Naive thymus-derived CD4-positive, alpha-beta T cell (primary cell): ENCODE measurements at regions of chr5 and their contacts with region 1.

Region 1: DNA sequence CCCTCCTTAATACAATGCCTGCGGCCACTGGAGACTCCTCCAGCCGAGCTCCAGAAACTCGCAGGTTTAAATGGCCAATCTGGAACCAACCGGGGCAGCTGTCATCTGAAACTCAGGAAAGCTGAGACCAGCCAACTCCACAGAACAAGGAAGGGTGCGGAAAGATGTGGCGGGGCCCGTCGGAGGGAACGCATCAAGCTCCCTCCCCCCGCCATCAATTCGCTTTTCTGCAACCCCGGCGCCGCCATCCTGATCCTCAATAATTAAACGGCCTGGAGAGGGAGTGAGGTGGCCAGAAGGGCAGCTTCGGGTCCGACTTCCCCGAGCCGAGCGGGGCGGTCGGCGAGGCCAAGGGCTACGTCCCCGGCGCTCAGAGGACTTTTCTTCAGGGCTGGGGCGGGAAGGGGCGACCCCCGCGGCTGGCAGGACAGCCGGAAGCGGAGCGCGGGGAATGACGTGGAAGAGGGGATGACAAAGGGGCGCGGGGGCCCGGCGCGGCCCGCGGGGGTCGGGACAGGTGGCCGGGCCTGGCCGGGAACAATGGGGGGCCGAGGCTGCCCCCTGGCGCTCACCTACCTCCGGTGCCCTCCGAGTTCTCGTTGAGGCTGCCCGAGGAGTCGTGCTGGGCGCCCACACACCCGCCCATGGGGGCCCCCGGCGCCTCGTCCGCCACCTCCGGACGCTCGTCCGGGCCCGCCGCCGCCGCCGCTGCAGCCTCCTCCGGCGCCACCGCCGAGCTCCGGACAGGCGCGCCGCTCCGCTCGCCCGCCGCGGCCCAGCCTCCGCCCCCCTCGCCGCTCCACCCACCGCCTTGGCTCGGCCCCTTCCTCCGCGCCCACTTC is at the start of gene UBTD2:
- DNase-seq: peak in 7 of 9 donors; percentile 51 to 84 (median 67)
- ATAC-seq: peak; percentile 89
- H3K4me3 ChIP-seq: peak within 1 kb of the TSS; percentile 73
- H3K4me3 Mint-ChIP-seq: peak within 1 kb of the TSS; percentile 85 to 94 (median 90)
- H3K27ac ChIP-seq: peak within 1 kb of the TSS; percentile 61
- H3K27ac Mint-ChIP-seq: peak within 1 kb of the TSS; percentile 67 to 94 (median 75)
- H3K4me1 ChIP-seq: peaks cover 11 to 13% of the 10 kb centered on the region in 2 donors
- H3K4me1 Mint-ChIP-seq: peaks cover 10 to 34% (median 29%) of the 10 kb centered on the region in 7 donors
- H3K27me3 ChIP-seq: no peaks in the 10 kb centered on the region
- H3K27me3 Mint-ChIP-seq: peaks cover 0 to 24% (median 0%) of the 10 kb centered on the region in 5 donors
- total RNA-seq, gene UBTD2: 2.3 to 8.3 (median 5.9) TPM

Region 2: GRCh38 chr5:171031977-171032376 is 1251.3 kb before region 1 on chr5:
- CTCF ChIA-PET with region 1: no interaction called
- POLR2A ChIA-PET with region 1: no interaction called
- intact Hi-C with region 1: no loop called
- DNase-seq: no peak
- ATAC-seq: no peak
- H3K4me3 ChIP-seq: no peak overlapping the region
- H3K4me3 Mint-ChIP-seq: no peak overlapping the region
- H3K27ac ChIP-seq: no peak overlapping the region
- H3K27ac Mint-ChIP-seq: no peak overlapping the region
- H3K4me1 ChIP-seq: no peaks in the 10 kb centered on the region
- H3K4me1 Mint-ChIP-seq: no peaks in the 10 kb centered on the region
- H3K27me3 ChIP-seq: no peaks in the 10 kb centered on the region
- H3K27me3 Mint-ChIP-seq: peaks cover 0 to 5% (median 0%) of the 10 kb centered on the region in 5 donors

Region 3: GRCh38 chr5:171175746-171176145 is 1107.5 kb before region 1 on chr5:
- CTCF ChIA-PET with region 1: no interaction called
- POLR2A ChIA-PET with region 1: no interaction called
- intact Hi-C with region 1: no loop called
- DNase-seq: no peak
- ATAC-seq: no peak
- H3K4me3 ChIP-seq: no peak overlapping the region
- H3K4me3 Mint-ChIP-seq: no peak overlapping the region
- H3K27ac ChIP-seq: no peak overlapping the region
- H3K27ac Mint-ChIP-seq: no peak overlapping the region
- H3K4me1 ChIP-seq: no peaks in the 10 kb centered on the region
- H3K4me1 Mint-ChIP-seq: no peaks in the 10 kb centered on the region
- H3K27me3 ChIP-seq: no peaks in the 10 kb centered on the region
- H3K27me3 Mint-ChIP-seq: peaks cover 0 to 11% (median 6%) of the 10 kb centered on the region in 5 donors

Region 4: DNA sequence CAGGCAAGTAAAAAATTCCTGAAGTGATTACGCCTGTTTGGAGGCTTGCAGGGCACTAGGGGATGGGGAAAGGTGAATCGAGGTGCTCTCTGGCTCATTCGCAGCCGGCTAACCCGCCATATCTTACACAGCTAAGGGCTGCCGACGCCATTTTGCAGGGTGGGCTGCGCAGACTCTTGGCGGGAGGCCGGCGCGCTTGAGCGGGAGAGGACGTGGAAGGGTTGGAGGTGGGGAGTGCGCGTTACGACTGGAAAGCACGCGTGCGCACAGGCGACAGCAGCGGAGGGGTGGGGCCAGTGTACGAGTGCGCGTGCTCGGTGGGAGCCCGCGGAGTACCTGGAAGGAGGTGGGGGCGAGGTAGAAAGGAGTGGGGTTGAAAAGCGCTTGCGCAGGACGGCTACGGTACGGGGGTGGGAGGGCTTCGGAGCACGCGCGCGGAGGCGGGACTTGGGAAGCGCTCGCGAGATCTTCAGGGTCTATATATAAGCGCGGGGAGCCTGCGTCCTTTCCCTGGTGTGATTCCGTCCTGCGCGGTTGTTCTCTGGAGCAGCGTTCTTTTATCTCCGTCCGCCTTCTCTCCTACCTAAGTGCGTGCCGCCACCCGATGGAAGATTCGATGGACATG is 895.8 kb before region 1 on chr5 and contains the start of gene NPM1:
- CTCF ChIA-PET with region 1: no interaction called
- POLR2A ChIA-PET with region 1: interaction called, 4 read pairs
- intact Hi-C with region 1: loop called (anchors 1 to 5 kb)
- DNase-seq: peak; percentile 90 to 99 (median 98)
- ATAC-seq: peak; percentile 93
- H3K4me3 ChIP-seq: peak within 1 kb of the TSS; percentile 91
- H3K4me3 Mint-ChIP-seq: peak within 1 kb of the TSS; percentile 92 to 99 (median 98)
- H3K27ac ChIP-seq: peak within 1 kb of the TSS; percentile 88
- H3K27ac Mint-ChIP-seq: peak within 1 kb of the TSS; percentile 96 to 100 (median 98)
- H3K4me1 ChIP-seq: peaks cover 31 to 40% of the 10 kb centered on the region in 2 donors
- H3K4me1 Mint-ChIP-seq: peaks cover 25 to 52% (median 49%) of the 10 kb centered on the region in 7 donors
- H3K27me3 ChIP-seq: no peaks in the 10 kb centered on the region
- H3K27me3 Mint-ChIP-seq: peaks cover 0 to 6% (median 0%) of the 10 kb centered on the region in 5 donors
- total RNA-seq, gene NPM1: 807 to 1,238 (median 1,192) TPM

Region 5: GRCh38 chr5:172065501-172065990 is 217.7 kb before region 1 on chr5:
- CTCF ChIA-PET with region 1: no interaction called
- POLR2A ChIA-PET with region 1: no interaction called
- intact Hi-C with region 1: loop called (anchors 2 kb)
- DNase-seq: no peak
- ATAC-seq: no peak
- H3K4me3 ChIP-seq: no peak overlapping the region
- H3K4me3 Mint-ChIP-seq: peak overlapping the region; percentile 7 to 86 (median 78)
- H3K27ac ChIP-seq: peak overlapping the region; percentile 82
- H3K27ac Mint-ChIP-seq: peak overlapping the region; percentile 87 to 99 (median 96)
- H3K4me1 ChIP-seq: peaks cover 36 to 48% of the 10 kb centered on the region in 2 donors
- H3K4me1 Mint-ChIP-seq: peaks cover 53 to 85% (median 75%) of the 10 kb centered on the region in 7 donors
- H3K27me3 ChIP-seq: no peaks in the 10 kb centered on the region
- H3K27me3 Mint-ChIP-seq: no peaks in the 10 kb centered on the region

Region 6: GRCh38 chr5:172114875-172115422 is 168.3 kb before region 1 on chr5:
- CTCF ChIA-PET with region 1: no interaction called
- POLR2A ChIA-PET with region 1: no interaction called
- intact Hi-C with region 1: loop called in 1 of 2 experiments (anchors 2 kb)
- DNase-seq: peak; percentile 35 to 78 (median 44)
- ATAC-seq: peak; percentile 70
- H3K4me3 ChIP-seq: peak overlapping the region; percentile 50
- H3K4me3 Mint-ChIP-seq: peak overlapping the region; percentile 54 to 90 (median 80)
- H3K27ac ChIP-seq: peak overlapping the region; percentile 70
- H3K27ac Mint-ChIP-seq: peak overlapping the region; percentile 75 to 98 (median 94)
- H3K4me1 ChIP-seq: peaks cover 67 to 80% of the 10 kb centered on the region in 2 donors
- H3K4me1 Mint-ChIP-seq: peaks cover 48 to 86% (median 72%) of the 10 kb centered on the region in 7 donors
- H3K27me3 ChIP-seq: no peaks in the 10 kb centered on the region
- H3K27me3 Mint-ChIP-seq: no peaks in the 10 kb centered on the region

Region 7: GRCh38 chr5:172303572-172304335 is 20.5 kb after region 1 on chr5:
- CTCF ChIA-PET with region 1: no interaction called
- POLR2A ChIA-PET with region 1: no interaction called
- intact Hi-C with region 1: no loop called
- DNase-seq: no peak
- ATAC-seq: no peak
- H3K4me3 ChIP-seq: no peak overlapping the region
- H3K4me3 Mint-ChIP-seq: no peak overlapping the region
- H3K27ac ChIP-seq: no peak overlapping the region
- H3K27ac Mint-ChIP-seq: no peak overlapping the region
- H3K4me1 ChIP-seq: no peaks in the 10 kb centered on the region
- H3K4me1 Mint-ChIP-seq: no peaks in the 10 kb centered on the region
- H3K27me3 ChIP-seq: no peaks in the 10 kb centered on the region
- H3K27me3 Mint-ChIP-seq: peaks cover 0 to 11% (median 9%) of the 10 kb centered on the region in 5 donors

Region 8: GRCh38 chr5:172697123-172698121 is 414.2 kb after region 1 on chr5:
- CTCF ChIA-PET with region 1: no interaction called
- POLR2A ChIA-PET with region 1: interaction called, 3 read pairs
- intact Hi-C with region 1: loop called in 1 of 2 experiments (anchors 5 kb)
- DNase-seq: peak; percentile 64 to 85 (median 80)
- ATAC-seq: peak; percentile 98
- H3K4me3 ChIP-seq: peak overlapping the region; percentile 78
- H3K4me3 Mint-ChIP-seq: peak overlapping the region; percentile 77 to 96 (median 94)
- H3K27ac ChIP-seq: peak overlapping the region; percentile 72
- H3K27ac Mint-ChIP-seq: peak overlapping the region; percentile 88 to 98 (median 95)
- H3K4me1 ChIP-seq: peaks cover 5 to 10% of the 10 kb centered on the region in 2 donors
- H3K4me1 Mint-ChIP-seq: peaks cover 0 to 24% (median 20%) of the 10 kb centered on the region in 7 donors
- H3K27me3 ChIP-seq: no peaks in the 10 kb centered on the region
- H3K27me3 Mint-ChIP-seq: peaks cover 6 to 26% (median 15%) of the 10 kb centered on the region in 5 donors

Region 9: DNA sequence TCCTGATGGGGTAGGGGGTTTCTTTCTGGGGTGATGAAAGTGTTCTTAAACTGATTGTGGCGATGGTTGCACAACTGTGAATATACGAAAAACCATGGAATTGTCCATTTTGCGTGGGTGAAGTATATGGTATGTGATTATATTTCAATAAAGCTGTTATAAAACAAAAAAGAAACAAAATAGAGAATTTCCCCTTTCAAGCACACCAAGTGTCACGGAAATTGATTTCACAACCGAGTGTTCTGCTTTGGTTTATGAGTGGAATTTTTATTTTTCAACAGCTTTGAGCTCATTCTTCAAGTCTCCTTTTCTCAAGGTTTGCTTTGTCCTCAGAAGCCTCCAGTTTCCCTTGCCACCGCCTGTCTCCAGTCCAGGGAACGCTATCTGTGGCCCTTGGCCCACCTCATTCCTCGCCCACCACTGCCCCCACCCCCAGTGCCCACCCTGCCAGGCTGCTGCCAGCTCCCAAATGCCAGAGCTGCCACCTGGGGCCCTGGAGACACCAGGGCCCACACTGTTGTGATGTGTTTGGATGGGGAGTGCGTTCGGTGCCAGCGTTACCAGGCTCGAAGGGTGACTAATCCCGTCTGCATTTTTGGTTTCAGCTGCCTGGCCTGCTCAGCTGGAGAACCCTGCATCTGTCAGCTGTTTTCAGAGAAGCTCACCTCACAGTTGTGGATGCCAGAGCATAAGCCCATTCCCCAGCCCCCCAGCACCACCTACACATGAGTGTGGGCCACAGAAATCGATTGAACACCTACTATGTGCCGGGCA is 457.4 kb after region 1 on chr5:
- CTCF ChIA-PET with region 1: no interaction called
- POLR2A ChIA-PET with region 1: no interaction called
- intact Hi-C with region 1: no loop called
- DNase-seq: no peak
- ATAC-seq: peak; percentile 68
- H3K4me3 ChIP-seq: no peak overlapping the region
- H3K4me3 Mint-ChIP-seq: no peak overlapping the region
- H3K27ac ChIP-seq: no peak overlapping the region
- H3K27ac Mint-ChIP-seq: peak overlapping the region in 1 of 9 donors; percentile 55
- H3K4me1 ChIP-seq: no peaks in the 10 kb centered on the region
- H3K4me1 Mint-ChIP-seq: peaks cover 0 to 6% (median 0%) of the 10 kb centered on the region in 7 donors
- H3K27me3 ChIP-seq: no peaks in the 10 kb centered on the region
- H3K27me3 Mint-ChIP-seq: no peaks in the 10 kb centered on the region